Adrenal gland (tissue), 19 donors: ENCODE measurements at regions of chr3 and their contacts with region 1.

Region 1: DNA sequence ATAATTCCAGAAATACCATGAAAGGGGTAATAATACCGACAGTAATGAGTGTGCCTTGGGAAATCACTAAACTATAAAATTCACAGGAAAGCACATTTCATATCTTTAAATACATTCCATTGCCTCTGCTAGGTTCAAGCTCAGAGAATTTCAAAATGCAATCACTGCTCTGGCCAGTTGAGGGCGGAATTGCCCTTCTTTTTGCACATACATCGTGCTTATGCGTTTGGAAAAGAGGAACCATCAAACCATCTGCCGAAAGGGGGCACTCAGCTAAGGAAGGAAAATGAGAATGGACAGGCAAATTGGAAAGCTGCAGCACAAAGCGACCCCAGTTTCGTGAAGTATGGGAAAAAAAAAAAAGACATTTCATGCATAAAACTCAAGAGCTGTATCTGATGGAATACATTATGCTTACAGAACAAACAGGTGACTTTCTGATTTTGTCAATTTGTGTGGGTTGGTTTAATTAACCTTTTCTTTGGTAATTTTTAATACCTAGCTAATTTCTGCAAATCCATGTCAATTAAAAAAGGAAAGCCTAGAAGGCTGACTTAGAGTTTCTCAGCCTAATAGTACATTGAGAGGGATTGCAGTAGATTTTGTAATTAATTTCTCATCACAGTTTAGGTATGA is 61.4 kb downstream of the TUSC7 start:
- DNase-seq: peak; percentile 70 to 94 (median 78)
- H3K4me3 ChIP-seq: peak overlapping the region in 1 of 4 donors; percentile 20
- H3K27ac ChIP-seq: no peak overlapping the region
- H3K4me1 ChIP-seq: peaks cover 0 to 7% of the 10 kb centered on the region in 2 donors
- H3K27me3 ChIP-seq: no peaks in the 10 kb centered on the region
- CTCF ChIP-seq: peak; percentile 79 to 99 (median 92)
- POLR2A ChIP-seq: no peak

Region 2: DNA sequence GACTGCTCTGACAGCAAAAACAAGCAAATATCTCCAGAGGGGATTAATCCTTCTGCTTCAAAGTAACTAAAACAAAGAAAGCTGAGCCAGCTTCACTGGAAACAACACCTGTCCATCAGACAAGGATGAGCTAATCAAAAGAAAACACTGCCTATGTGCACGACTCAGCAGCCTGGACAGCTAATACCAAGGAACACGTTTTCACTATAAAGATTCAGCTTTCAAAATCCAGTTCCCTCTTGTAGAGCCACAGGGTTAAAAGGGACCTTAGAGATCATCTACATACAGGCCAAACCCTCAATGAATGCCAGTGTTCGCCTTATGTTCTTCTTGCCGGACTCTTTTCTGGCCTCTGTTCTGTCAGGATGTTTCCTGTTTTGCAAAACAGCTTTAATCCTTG is 54.4 kb before region 1 on chr3:
- intact Hi-C with region 1: no loop called
- DNase-seq: no peak
- H3K4me3 ChIP-seq: no peak overlapping the region
- H3K27ac ChIP-seq: no peak overlapping the region
- H3K4me1 ChIP-seq: no peaks in the 10 kb centered on the region
- H3K27me3 ChIP-seq: no peaks in the 10 kb centered on the region
- CTCF ChIP-seq: no peak
- POLR2A ChIP-seq: no peak

Region 3: DNA sequence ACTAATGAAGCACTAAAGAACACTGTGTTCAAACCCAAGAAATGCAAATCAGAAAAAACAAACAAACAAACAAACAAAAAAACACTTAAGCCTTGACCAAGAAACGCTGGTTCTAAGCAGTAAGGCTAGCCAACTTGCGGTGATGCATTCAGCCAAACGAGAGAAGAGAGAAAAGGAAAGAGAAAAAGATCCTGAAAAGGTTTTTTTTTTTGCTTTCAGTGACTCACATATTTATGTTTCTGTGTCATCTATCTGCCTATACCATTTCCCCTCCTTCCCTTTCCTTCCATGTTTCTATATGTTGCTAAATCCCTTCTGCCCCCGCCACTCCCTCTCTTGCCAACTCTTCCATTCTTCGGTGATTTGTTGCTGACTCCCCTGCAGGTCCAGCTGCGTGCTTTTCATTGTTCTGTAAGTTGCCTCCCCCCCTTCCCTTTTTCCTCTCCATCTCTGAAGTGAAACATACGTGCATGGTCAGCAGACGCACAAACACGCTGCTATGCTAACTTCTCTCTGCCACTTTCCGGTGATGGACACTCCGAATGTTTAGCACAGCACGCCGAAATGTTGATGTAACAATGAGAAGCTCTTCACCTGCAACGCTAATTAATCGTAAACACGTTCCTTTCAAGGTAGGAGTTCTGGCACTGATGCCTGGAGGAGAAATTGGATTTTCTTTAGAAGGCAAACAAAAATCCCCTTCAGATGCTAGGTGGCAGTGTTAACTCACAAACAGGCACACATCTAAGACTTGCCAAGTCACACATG is 93.1 kb after region 1 on chr3:
- intact Hi-C with region 1: loop called in 1 of 2 experiments (anchors 10 kb)
- DNase-seq: peak in 6 of 7 donors; percentile 31 to 65 (median 45)
- H3K4me3 ChIP-seq: peak overlapping the region in 3 of 4 donors; percentile 4 to 60 (median 18)
- H3K27ac ChIP-seq: no peak overlapping the region
- H3K4me1 ChIP-seq: peaks cover 0 to 12% of the 10 kb centered on the region in 2 donors
- H3K27me3 ChIP-seq: no peaks in the 10 kb centered on the region
- CTCF ChIP-seq: peak; percentile 23 to 81 (median 72)
- POLR2A ChIP-seq: no peak

Region 4: DNA sequence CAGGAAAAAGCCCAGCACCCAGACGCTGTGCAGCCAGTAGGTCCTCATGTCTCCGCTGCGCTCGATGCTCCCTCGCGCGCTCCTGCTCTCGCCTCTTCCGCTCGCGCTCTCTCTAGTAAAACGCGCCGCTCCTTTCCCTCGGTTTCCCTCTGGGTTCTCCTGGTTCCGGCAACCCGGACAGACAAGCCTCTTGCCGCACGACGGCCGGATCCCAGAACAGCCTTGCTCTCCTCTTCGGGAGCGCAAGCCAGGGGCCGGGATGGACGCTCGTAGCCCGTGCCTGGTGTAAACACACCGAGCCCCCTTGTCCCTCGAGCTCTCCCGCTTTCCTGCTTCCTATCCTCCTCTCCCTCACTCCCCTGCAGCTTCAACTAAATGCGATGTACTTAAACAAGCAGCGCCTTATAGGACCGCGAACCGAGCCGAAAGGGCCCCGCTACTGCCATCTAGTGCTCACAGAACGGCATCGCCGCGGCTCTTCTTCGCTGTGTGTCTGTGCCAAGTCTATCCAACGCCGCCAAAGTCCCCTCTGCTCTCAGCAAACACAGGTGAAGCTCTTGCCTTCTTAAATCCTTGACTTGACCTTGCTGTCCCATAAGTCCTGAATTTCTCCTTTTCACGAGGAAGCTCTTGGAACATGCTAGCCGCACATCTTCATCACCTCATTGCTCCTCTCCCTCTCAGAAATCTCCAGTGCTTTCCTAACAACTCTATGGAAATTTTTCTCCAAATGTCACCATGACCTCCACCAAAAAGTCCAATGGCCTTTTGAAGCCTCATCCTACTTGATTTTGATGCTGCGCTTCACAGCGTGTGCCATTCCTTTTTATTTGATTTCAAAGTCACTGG is 1226.5 kb after region 1 on chr3:
- intact Hi-C with region 1: loop called in 1 of 2 experiments (anchors 10 kb)
- DNase-seq: peak; percentile 76 to 95 (median 84)
- H3K4me3 ChIP-seq: peak overlapping the region; percentile 13 to 76 (median 46)
- H3K27ac ChIP-seq: peak overlapping the region in 2 of 5 donors; percentile 59 to 68
- H3K4me1 ChIP-seq: peaks cover 0 to 18% of the 10 kb centered on the region in 2 donors
- H3K27me3 ChIP-seq: no peaks in the 10 kb centered on the region
- CTCF ChIP-seq: peak; percentile 75 to 88 (median 80)
- POLR2A ChIP-seq: peak in 1 of 2 donors; percentile 51

Region 5: GRCh38 chr3:118636841-118637240 is 1865.9 kb after region 1 on chr3:
- intact Hi-C with region 1: loop called in 1 of 2 experiments (anchors 10 kb)
- DNase-seq: no peak
- H3K4me3 ChIP-seq: no peak overlapping the region
- H3K27ac ChIP-seq: no peak overlapping the region
- H3K4me1 ChIP-seq: no peaks in the 10 kb centered on the region
- H3K27me3 ChIP-seq: no peaks in the 10 kb centered on the region
- CTCF ChIP-seq: no peak
- POLR2A ChIP-seq: no peak